ENCODE measurements at regions of chr15 and their contacts with region 1.

Region 1: DNA sequence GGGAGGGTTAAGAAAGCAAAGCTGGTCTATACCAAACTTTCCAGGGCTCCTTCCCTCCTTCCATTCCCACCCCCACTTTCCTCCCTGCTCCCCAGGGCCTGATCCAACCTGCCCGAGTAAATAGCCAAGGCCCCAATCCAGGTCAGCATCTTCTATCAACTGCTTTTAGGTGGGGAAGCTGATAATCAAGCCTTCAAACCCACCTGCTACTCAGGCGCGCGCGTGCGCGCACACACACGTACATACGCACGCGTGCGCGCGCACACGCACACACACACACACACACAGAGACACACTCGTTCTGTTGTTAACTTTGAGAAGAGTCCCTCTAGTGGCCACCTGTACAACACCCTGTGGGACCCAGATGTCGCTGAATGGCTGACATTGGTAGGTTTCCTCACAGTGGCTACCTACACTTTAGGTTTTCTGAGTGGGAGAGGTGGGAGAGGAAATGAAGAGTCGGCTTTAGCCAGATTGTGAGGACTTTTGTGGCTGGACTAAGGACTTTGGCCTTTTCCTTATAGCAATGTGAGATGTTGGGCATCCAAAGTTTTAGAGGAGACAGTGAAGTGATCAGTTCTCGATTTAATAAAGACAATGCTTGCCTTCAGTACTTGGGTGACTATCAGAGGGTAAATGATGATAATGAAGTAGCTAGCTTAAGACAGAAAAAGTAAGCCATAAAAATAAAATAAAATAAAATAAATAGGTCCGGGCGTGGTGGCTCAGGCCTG is 179.9 kb upstream of the C2CD4B start:
- DNase-seq: peak; percentile 88 to 91
- ATAC-seq: peak; percentile 94 to 99
- H3K4me3 ChIP-seq: peak overlapping the region; percentile 10; the same call in 2 of the 3 replicates
- H3K27ac ChIP-seq: peak overlapping the region; percentile 6 to 58; a peak in 2 of 6 replicates
- H3K4me1 ChIP-seq: no peaks in the 10 kb centered on the region
- CTCF ChIP-seq: peak; percentile 88
- EP300 ChIP-seq: no peak
- POLR2A ChIP-seq: no peak
- RAD21 ChIP-seq: peak; percentile 65 to 80

Region 2: GRCh38 chr15:62334536-62334935 is 10.4 kb before region 1 on chr15:
- CTCF ChIA-PET with region 1: interaction called, 28 read pairs
- POLR2A ChIA-PET with region 1: no interaction called
- DNase-seq: no peak
- ATAC-seq: no peak
- H3K4me3 ChIP-seq: no peak overlapping the region
- H3K27ac ChIP-seq: no peak overlapping the region
- H3K4me1 ChIP-seq: no peaks in the 10 kb centered on the region
- CTCF ChIP-seq: no peak
- EP300 ChIP-seq: no peak
- POLR2A ChIP-seq: no peak
- RAD21 ChIP-seq: no peak

Region 3: DNA sequence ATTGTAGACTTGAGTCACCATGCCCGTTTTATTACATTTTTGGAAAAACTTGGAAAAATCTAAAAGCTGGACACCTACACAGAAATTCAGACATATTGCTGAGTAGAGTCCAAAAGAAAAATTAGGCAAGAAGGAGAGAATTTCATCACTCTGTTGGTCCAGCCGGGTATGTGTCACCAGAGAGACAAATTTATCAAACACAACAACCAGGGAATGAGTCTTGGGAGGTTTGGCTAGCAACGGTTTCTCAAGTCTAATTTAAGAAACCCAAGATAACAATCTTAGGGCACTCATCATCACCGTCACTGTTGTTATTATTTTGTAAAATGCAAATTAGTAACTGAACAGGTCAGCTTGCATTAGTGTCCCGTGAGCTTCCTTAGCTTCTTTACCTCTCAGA is 17.6 kb after region 1 on chr15:
- CTCF ChIA-PET with region 1: interaction called, 41 read pairs
- POLR2A ChIA-PET with region 1: no interaction called
- DNase-seq: no peak
- ATAC-seq: no peak
- H3K4me3 ChIP-seq: no peak overlapping the region
- H3K27ac ChIP-seq: no peak overlapping the region
- H3K4me1 ChIP-seq: no peaks in the 10 kb centered on the region
- CTCF ChIP-seq: no peak
- EP300 ChIP-seq: no peak
- POLR2A ChIP-seq: no peak
- RAD21 ChIP-seq: no peak

Region 4: DNA sequence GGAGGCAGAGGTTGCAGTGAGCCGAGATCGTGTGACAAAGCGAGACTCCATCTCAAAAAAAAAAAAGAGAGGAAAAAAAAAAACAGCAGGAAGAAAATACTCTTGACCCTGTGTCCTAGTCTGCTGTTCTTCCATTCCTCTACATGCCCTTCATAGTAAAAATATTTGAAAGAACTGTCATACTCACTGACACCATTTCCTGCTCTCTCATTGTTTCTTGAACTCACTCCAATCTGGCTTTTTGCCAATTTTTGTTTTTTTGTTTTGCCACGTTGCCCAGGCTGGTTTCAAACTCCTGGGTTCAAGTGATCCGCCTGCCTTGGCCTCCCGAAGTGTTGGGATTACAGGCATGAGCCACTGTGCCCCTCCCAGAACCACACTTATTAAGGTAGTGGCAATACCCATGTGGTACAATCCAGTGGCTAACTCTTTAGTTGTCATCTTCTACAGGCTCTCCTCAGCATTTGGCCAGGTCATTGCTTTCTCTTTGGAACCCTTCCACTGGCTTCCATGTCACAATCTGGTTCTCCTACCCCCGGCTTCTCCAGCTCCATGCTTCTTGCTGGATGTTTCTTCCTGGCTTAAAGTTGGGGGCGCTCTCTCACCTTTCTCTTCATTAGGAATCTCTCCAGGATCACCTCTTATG is 58.3 kb after region 1 on chr15:
- CTCF ChIA-PET with region 1: no interaction called
- POLR2A ChIA-PET with region 1: no interaction called
- DNase-seq: peak in 1 of 2 experiments; percentile 15
- ATAC-seq: peak in 1 of 2 experiments; percentile 63; a peak in 2 of 6 replicates
- H3K4me3 ChIP-seq: no peak overlapping the region
- H3K27ac ChIP-seq: no peak overlapping the region
- H3K4me1 ChIP-seq: peaks cover 12% of the 10 kb centered on the region
- CTCF ChIP-seq: no peak
- EP300 ChIP-seq: no peak
- POLR2A ChIP-seq: no peak
- RAD21 ChIP-seq: no peak

Measured in A549 (cell line).